ENCODE measurements at regions of chr5 and their contacts with region 1.

Region 1: DNA sequence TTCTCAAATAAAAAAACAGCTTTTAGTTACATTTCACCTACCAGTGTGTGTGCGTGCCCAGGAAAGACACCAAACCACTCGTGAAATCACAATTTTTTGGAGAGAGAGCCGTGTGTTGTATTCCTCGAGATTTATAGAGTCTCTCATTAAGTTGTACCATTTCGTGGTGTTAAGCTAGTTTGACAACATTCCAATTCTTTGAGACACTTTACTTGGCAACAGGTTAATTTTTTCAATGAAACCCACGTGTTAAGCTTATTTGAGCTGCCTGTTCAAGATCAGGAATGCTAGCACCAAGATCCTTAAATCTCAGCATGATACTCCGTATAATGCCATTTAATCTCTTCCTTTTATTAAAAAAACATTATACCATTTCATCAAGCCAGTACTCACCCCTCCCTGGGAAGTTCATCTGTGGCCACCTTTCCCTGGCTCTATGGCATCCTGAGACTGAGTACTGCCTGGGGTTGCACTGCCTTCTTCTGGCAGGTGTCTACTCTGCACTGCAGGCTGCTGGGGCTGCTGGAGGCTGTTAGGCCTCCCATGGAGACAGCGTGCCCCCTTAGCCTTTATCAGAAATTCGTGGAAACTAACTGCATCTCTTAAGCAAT is 143.7 kb downstream of the ARHGAP26 start:
- DNase-seq: no peak
- H3K4me3 ChIP-seq: no peak overlapping the region
- H3K27me3 ChIP-seq: no peaks in the 10 kb centered on the region
- CTCF ChIP-seq: 0 out of 2 replicates have a peak, but pooled peaks have one; percentile 7

Region 2: DNA sequence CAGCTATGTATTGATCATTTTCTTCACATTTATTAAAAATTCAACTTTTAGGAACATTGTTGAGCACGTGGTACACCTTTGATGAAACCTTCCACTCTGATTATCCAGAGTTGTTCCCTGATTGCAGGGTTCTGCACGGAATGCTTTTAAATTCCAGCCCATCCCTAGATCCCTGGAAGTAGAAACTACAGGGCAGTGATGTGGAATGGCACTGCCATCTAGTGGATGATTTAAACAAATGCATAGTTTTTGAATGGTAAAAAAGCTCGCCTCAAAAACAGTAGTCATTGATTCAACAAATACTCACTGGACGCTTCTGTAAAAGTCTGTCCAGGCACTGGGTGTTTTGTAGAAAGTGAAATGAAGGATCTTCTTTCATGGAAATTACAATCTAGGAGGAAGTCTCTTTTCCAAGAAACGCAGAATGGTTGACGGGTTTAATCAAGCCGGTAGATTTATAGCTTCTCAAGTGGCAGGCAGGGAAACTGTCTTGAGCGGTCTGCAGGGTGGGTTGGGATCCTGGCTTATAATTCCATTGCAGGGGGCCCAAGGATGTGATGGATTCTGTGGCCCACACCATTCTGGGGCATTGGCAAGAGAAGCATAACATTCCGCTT is 25.3 kb before region 1 on chr5:
- CTCF ChIA-PET with region 1: interaction called, 10 read pairs
- POLR2A ChIA-PET with region 1: no interaction called
- DNase-seq: no peak
- H3K4me3 ChIP-seq: no peak overlapping the region
- H3K27me3 ChIP-seq: no peaks in the 10 kb centered on the region; the same call in 1 of the 2 replicates
- CTCF ChIP-seq: peak; percentile 68

Measured in BJ (cell line).